Heart right ventricle (tissue), 16 donors: ENCODE measurements at regions of chr14 and their contacts with region 1.

Region 1: DNA sequence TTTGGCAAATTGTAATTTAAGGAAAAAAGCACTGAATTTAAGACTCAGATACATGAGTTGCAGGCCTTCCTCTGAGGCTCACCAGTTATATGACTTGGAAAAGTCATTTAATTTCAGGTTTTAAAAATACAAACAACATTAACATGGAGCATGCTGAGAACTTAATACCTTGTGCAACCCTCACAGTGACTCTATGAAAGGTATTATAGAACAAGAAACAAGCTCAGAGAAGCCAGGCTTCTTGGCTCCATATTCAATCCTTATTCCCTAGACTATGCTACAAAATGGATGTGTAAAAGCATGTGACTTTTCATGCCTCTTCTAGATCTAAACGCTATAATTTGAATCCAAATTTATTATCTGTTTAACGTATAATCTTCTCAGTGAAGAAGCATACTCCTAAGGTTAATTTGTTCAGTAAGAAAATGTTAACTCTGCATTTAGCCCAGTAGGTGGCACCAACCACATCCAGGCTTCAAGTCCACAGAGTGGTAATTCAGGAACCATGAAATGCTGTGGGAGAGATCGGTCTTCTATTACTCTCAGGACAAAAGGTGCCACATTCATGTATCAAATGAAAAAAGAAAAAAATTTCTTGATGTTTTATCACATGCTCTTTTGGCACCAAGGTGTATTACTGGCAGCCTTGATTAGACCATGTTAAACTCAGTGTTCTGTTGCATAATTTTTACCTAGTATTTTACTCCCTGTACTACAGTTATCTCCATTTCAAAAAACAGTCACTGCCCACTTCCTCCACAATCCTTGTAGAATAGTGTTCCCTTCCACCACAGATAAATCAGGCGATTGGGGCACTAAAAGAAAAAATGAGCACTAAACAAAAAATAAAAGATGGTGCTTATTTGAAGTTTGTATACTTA is 9.3 kb downstream of the CCDC196 start:
- DNase-seq: peak in 1 of 2 donors; percentile 56
- ATAC-seq: peak in 7 of 8 donors; percentile 81 to 97 (median 91)
- H3K4me3 ChIP-seq: peak overlapping the region in 4 of 10 donors; percentile 7 to 29 (median 25)
- H3K27ac ChIP-seq: no peak overlapping the region
- H3K4me1 ChIP-seq: peaks cover 0 to 32% (median 10%) of the 10 kb centered on the region in 9 donors
- H3K27me3 ChIP-seq: no peaks in the 10 kb centered on the region
- CTCF ChIP-seq: peak; percentile 58 to 86 (median 82)

Region 2: DNA sequence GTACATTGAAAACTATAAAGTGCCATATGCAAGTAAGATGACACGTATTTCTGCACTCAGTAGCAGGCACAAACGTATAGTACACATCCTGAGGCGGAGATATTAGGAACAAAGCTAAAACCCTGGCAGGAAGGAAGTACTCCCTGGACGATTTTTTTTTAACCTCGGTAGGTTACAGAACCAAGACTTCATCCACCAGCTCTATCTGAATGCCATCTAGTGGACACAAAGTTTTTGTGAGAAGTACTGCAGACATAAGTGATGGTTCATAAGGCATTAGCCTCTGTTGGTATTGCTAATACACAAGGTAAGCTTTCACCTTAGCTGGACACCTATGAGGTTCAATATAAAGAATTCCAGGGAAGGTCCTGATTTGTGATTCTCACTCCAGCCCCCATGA is 92.3 kb before region 1 on chr14:
- intact Hi-C with region 1: loop called in 1 of 10 experiments (anchors 5 kb)
- DNase-seq: no peak
- ATAC-seq: peak in 6 of 8 donors; percentile 20 to 69 (median 60)
- H3K4me3 ChIP-seq: no peak overlapping the region
- H3K27ac ChIP-seq: no peak overlapping the region
- H3K4me1 ChIP-seq: peaks cover 0 to 14% (median 5%) of the 10 kb centered on the region in 9 donors
- H3K27me3 ChIP-seq: no peaks in the 10 kb centered on the region
- CTCF ChIP-seq: peak in 7 of 9 donors; percentile 33 to 60 (median 45)

Region 3: GRCh38 chr14:66413901-66414300 is 81.6 kb before region 1 on chr14:
- intact Hi-C with region 1: no loop called
- DNase-seq: no peak
- ATAC-seq: no peak
- H3K4me3 ChIP-seq: no peak overlapping the region
- H3K27ac ChIP-seq: no peak overlapping the region
- H3K4me1 ChIP-seq: no peaks in the 10 kb centered on the region
- H3K27me3 ChIP-seq: no peaks in the 10 kb centered on the region
- CTCF ChIP-seq: no peak

Region 4: DNA sequence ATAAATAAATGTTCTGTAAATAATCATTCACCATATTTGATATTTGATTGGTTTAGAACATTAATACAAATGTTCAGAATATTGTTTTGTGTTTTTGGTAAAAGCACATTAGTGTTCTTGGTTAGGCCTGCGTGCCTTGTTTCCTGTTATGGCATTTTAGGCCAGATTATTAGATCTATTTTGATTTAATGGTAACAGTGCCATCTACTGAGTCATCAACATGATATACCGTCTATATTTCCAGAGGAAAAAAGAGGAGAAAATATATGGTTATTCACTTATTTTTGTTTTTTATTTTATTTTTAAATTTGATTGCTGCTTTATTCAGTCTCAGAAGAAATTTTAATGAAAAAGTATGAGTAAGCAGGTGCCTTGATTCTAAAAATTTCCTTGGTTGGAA is 72.8 kb after region 1 on chr14:
- intact Hi-C with region 1: loop called in 1 of 10 experiments (anchors 5 kb)
- DNase-seq: no peak
- ATAC-seq: no peak
- H3K4me3 ChIP-seq: no peak overlapping the region
- H3K27ac ChIP-seq: no peak overlapping the region
- H3K4me1 ChIP-seq: peaks cover 0 to 25% (median 15%) of the 10 kb centered on the region in 9 donors
- H3K27me3 ChIP-seq: no peaks in the 10 kb centered on the region
- CTCF ChIP-seq: peak in 4 of 9 donors; percentile 10 to 44 (median 30)

Region 5: DNA sequence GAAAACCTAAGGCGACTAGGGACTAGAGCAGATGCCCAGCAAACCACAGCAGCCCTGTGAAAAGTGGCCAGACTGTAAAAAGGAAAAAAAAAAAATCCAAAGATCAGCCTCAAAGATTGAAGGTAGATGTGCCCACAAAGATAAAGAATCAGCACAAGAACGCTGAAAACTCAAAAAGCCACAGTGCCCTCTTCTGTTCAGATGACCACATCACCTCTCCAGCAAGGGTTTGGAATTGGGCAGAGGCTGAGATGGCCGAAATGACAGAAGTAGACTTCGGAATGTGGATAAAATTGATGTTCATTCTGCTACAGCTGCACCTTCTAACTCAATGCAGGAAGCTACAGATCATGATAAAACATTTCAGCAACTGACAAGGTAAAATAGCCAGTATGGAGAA is 166.9 kb after region 1 on chr14:
- intact Hi-C with region 1: loop called in 3 of 10 experiments (anchors 5 to 10 kb)
- DNase-seq: no peak
- ATAC-seq: no peak
- H3K4me3 ChIP-seq: no peak overlapping the region
- H3K27ac ChIP-seq: no peak overlapping the region
- H3K4me1 ChIP-seq: peaks cover 0 to 3% (median 0%) of the 10 kb centered on the region in 9 donors
- H3K27me3 ChIP-seq: no peaks in the 10 kb centered on the region
- CTCF ChIP-seq: peak in 8 of 9 donors; percentile 7 to 57 (median 45)

Region 6: GRCh38 chr14:66680216-66680615 is 184.8 kb after region 1 on chr14:
- intact Hi-C with region 1: no loop called
- DNase-seq: no peak
- ATAC-seq: no peak
- H3K4me3 ChIP-seq: no peak overlapping the region
- H3K27ac ChIP-seq: no peak overlapping the region
- H3K4me1 ChIP-seq: no peaks in the 10 kb centered on the region
- H3K27me3 ChIP-seq: no peaks in the 10 kb centered on the region
- CTCF ChIP-seq: no peak

Region 7: DNA sequence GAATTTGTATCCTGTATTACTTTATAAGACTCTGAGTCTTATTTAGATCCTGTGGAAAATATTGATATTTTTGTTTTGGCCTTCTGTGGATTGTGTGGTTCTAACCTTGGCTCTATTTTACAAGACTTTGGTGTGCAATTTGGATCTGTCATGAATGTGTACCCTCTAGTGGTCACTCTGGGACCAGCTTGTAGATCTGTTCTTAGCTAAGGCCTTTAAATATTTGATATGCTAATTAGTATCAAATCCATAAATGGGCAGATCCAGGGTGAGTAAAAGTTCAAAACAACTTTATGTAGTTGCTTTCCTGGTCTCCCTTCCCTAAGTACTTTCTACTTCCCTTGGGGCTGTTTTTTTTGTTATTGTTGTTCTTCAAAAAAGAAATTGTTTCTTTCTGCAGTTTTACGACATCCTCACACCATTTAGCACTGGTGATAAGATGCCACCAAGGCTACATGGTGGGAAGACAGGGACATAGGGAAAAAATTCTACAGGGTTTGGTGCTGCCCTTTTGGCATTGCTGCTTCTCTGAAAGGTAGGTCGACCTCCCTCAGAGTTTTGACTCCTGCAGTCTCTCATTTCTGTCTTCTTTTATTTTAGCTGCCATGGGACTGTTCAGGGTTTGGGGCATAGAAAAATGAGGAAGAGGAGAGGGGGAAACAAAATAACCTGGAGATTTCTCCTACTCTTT is 251.0 kb after region 1 on chr14:
- intact Hi-C with region 1: loop called in 3 of 10 experiments (anchors 10 kb)
- DNase-seq: peak in 1 of 2 donors; percentile 6
- ATAC-seq: peak in 5 of 8 donors; percentile 34 to 63 (median 61)
- H3K4me3 ChIP-seq: no peak overlapping the region
- H3K27ac ChIP-seq: no peak overlapping the region
- H3K4me1 ChIP-seq: peaks cover 0 to 22% (median 7%) of the 10 kb centered on the region in 9 donors
- H3K27me3 ChIP-seq: no peaks in the 10 kb centered on the region
- CTCF ChIP-seq: peak; percentile 33 to 71 (median 56)

Region 8: DNA sequence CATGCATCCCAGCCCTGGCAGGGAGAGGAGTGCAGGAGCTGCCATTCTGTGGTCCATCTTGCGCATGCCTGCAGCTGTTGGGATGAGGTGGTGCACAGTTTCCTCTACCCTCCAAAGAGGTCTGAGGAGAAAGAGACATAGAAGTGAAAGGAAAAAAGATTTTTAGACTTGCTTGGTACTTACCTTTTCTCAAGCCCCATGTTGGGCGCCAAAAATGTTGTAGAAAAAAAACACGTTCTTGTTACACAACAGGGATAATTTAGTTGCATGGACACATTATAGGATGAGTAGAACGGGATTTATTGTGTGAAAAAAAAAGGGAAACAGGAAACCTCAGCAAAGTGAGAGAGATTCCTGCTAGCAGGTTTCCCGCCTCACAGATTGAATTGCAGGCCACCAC is 449.4 kb after region 1 on chr14:
- intact Hi-C with region 1: no loop called
- DNase-seq: no peak
- ATAC-seq: no peak
- H3K4me3 ChIP-seq: no peak overlapping the region
- H3K27ac ChIP-seq: no peak overlapping the region
- H3K4me1 ChIP-seq: no peaks in the 10 kb centered on the region
- H3K27me3 ChIP-seq: no peaks in the 10 kb centered on the region
- CTCF ChIP-seq: no peak

Region 9: DNA sequence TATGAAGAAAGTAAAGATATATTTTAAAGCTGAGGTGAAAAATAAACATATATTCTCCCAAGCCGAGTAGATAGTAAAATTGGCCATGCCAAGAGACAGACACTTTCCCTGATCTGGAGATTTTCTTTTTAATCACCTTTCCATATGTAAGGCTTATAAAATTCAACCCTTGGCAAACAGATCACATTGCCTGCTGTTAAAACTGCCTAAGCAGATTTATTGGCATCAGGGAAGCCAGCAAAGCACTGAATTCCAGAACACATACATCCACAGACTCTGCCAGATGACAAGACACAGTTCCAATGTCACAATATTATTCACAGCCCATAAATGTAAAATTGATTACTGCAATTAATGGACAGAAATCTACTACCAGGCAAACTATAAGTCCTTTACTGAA is 615.6 kb after region 1 on chr14:
- intact Hi-C with region 1: loop called in 1 of 10 experiments (anchors 10 kb)
- DNase-seq: no peak
- ATAC-seq: no peak
- H3K4me3 ChIP-seq: no peak overlapping the region
- H3K27ac ChIP-seq: no peak overlapping the region
- H3K4me1 ChIP-seq: no peaks in the 10 kb centered on the region
- H3K27me3 ChIP-seq: no peaks in the 10 kb centered on the region
- CTCF ChIP-seq: no peak

Region 10: GRCh38 chr14:67276131-67276530 is 780.7 kb after region 1 on chr14:
- intact Hi-C with region 1: loop called in 1 of 10 experiments (anchors 5 kb)
- DNase-seq: no peak
- ATAC-seq: peak in 1 of 8 donors; percentile 42
- H3K4me3 ChIP-seq: no peak overlapping the region
- H3K27ac ChIP-seq: peak overlapping the region in 1 of 10 donors; percentile 15
- H3K4me1 ChIP-seq: peaks cover 0 to 30% (median 15%) of the 10 kb centered on the region in 9 donors
- H3K27me3 ChIP-seq: no peaks in the 10 kb centered on the region
- CTCF ChIP-seq: no peak